ENCODE measurements at regions of chr4 and their contacts with region 1.

Region 1: GRCh38 chr4:123396307-123397143 is at the start of gene SPRY1:
- DNase-seq: peak; percentile 47
- ATAC-seq: peak; percentile 45
- H3K4me3 Mint-ChIP-seq: peak within 1 kb of the TSS; percentile 88
- H3K27ac Mint-ChIP-seq: peak within 1 kb of the TSS; percentile 59
- H3K4me1 Mint-ChIP-seq: peaks cover 32% of the 10 kb centered on the region
- H3K27me3 Mint-ChIP-seq: peaks cover 12% of the 10 kb centered on the region
- CTCF ChIP-seq: no peak
- total RNA-seq, gene SPRY1: 4.0 and 4.1 TPM in 2 replicates

Region 2: GRCh38 chr4:122922877-122923511 is 473.5 kb before region 1 on chr4:
- CTCF ChIA-PET with region 1: no interaction called
- POLR2A ChIA-PET with region 1: no interaction called
- intact Hi-C with region 1: loop called (anchors 5 kb)
- DNase-seq: peak; percentile 70
- ATAC-seq: peak; percentile 97
- H3K4me3 Mint-ChIP-seq: peak overlapping the region; percentile 98
- H3K27ac Mint-ChIP-seq: peak overlapping the region; percentile 91
- H3K4me1 Mint-ChIP-seq: peaks cover 13% of the 10 kb centered on the region
- H3K27me3 Mint-ChIP-seq: no peaks in the 10 kb centered on the region
- CTCF ChIP-seq: no peak

Region 3: GRCh38 chr4:123418351-123418931 is 21.9 kb after region 1 on chr4:
- CTCF ChIA-PET with region 1: no interaction called
- POLR2A ChIA-PET with region 1: no interaction called
- intact Hi-C with region 1: loop called (anchors 2 kb)
- DNase-seq: no peak
- ATAC-seq: peak; percentile 42
- H3K4me3 Mint-ChIP-seq: peak overlapping the region; percentile 15
- H3K27ac Mint-ChIP-seq: no peak overlapping the region
- H3K4me1 Mint-ChIP-seq: peaks cover 34% of the 10 kb centered on the region
- H3K27me3 Mint-ChIP-seq: peaks cover 2% of the 10 kb centered on the region
- CTCF ChIP-seq: no peak

Region 4: GRCh38 chr4:123452616-123453015 is 56.1 kb after region 1 on chr4:
- CTCF ChIA-PET with region 1: no interaction called
- POLR2A ChIA-PET with region 1: interaction called, 5 read pairs
- intact Hi-C with region 1: loop called (anchors 1 kb)
- DNase-seq: no peak
- ATAC-seq: no peak
- H3K4me3 Mint-ChIP-seq: no peak overlapping the region
- H3K27ac Mint-ChIP-seq: no peak overlapping the region
- H3K4me1 Mint-ChIP-seq: peaks cover 51% of the 10 kb centered on the region
- H3K27me3 Mint-ChIP-seq: no peaks in the 10 kb centered on the region
- CTCF ChIP-seq: no peak

Region 5: GRCh38 chr4:123564758-123565346 is 168.3 kb after region 1 on chr4:
- CTCF ChIA-PET with region 1: interaction called, 30 read pairs
- POLR2A ChIA-PET with region 1: interaction called, 3 read pairs
- intact Hi-C with region 1: loop called (anchors 1 kb)
- DNase-seq: no peak
- ATAC-seq: peak; percentile 100
- H3K4me3 Mint-ChIP-seq: no peak overlapping the region
- H3K27ac Mint-ChIP-seq: no peak overlapping the region
- H3K4me1 Mint-ChIP-seq: peaks cover 3% of the 10 kb centered on the region
- H3K27me3 Mint-ChIP-seq: peaks cover 8% of the 10 kb centered on the region
- CTCF ChIP-seq: no peak

Region 6: GRCh38 chr4:123776254-123776653 is 379.7 kb after region 1 on chr4:
- CTCF ChIA-PET with region 1: interaction called, 3 read pairs
- POLR2A ChIA-PET with region 1: no interaction called
- intact Hi-C with region 1: loop called (anchors 5 kb)
- DNase-seq: no peak
- ATAC-seq: peak; percentile 73
- H3K4me3 Mint-ChIP-seq: no peak overlapping the region
- H3K27ac Mint-ChIP-seq: peak overlapping the region; percentile 14
- H3K4me1 Mint-ChIP-seq: peaks cover 7% of the 10 kb centered on the region
- H3K27me3 Mint-ChIP-seq: peaks cover 6% of the 10 kb centered on the region
- CTCF ChIP-seq: no peak